Activated CD8-positive, alpha-beta T cell treated with anti-CD3 and anti-CD28 coated beads for 36 hours (primary cell): ENCODE measurements at regions of chr3 and their contacts with region 1.

Region 1: GRCh38 chr3:50192689-50193141 is 1.3 kb downstream of the GNAT1 start:
- DNase-seq: peak; percentile 93
- ATAC-seq: peak; percentile 78
- H3K4me3 Mint-ChIP-seq: no peak overlapping the region
- H3K27ac Mint-ChIP-seq: no peak overlapping the region
- H3K4me1 Mint-ChIP-seq: peaks cover 11% of the 10 kb centered on the region
- H3K27me3 Mint-ChIP-seq: peaks cover 15% of the 10 kb centered on the region
- CTCF ChIP-seq: peak; percentile 94

Region 2: DNA sequence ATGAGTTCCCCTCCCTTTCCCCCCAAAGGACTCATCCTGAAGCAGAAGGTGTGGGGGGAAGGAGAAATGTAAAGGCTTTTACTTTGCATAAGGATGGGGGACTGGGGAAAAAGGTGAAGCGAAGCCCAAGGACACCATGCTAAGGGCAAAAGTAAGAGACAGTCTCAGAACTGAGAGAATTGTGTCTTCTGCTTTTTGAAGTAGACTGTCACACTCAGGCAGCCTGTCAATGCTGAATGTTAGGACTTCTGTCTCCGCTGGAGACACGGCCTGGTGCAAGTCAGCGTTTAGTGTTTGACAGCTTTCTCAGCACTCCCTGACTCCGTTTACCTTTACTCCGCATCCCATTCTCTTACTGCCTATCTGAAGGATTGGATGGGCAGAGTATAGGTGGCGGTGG is 90.2 kb before region 1 on chr3:
- CTCF ChIA-PET with region 1: no interaction called
- POLR2A ChIA-PET with region 1: no interaction called
- intact Hi-C with region 1: no loop called
- DNase-seq: no peak
- ATAC-seq: no peak
- H3K4me3 Mint-ChIP-seq: no peak overlapping the region
- H3K27ac Mint-ChIP-seq: no peak overlapping the region
- H3K4me1 Mint-ChIP-seq: peaks cover 5% of the 10 kb centered on the region
- H3K27me3 Mint-ChIP-seq: no peaks in the 10 kb centered on the region
- CTCF ChIP-seq: no peak

Region 3: DNA sequence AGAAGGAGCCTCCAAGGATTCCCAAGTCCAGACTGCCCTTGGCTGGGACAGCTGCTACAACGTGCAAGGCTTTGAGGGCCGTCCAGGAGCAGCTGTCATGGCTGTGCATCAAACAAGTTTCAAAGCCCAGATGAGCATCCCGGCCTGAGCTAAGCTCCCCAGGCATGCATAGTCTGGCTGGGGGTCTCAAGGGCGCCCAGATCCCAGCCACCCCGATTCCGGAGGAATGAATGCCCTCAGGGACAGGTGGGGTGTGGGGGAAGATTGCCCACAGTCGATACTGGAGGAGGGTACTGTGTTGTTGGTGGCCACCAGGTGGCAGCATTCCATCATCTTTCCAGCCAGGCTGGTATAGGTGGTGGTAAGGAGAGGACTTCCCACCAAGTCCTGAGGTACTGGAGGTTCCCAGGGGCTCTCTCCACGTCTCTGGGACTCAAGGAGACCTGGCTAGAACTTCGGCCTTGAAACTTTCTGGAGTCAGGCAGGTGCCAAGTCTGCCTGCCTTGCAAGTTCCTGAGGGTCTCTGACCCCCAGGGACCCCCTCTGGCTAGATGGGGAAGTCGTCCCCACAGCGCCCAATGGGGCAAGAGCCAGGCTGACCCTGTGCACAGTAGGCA is 71.2 kb before region 1 on chr3:
- CTCF ChIA-PET with region 1: interaction called, 30 read pairs
- POLR2A ChIA-PET with region 1: interaction called, 3 read pairs
- intact Hi-C with region 1: loop called (anchors 1 kb)
- DNase-seq: peak; percentile 84
- ATAC-seq: peak; percentile 90
- H3K4me3 Mint-ChIP-seq: no peak overlapping the region
- H3K27ac Mint-ChIP-seq: no peak overlapping the region
- H3K4me1 Mint-ChIP-seq: no peaks in the 10 kb centered on the region
- H3K27me3 Mint-ChIP-seq: no peaks in the 10 kb centered on the region
- CTCF ChIP-seq: peak; percentile 92

Region 4: GRCh38 chr3:50205414-50206276 is 12.9 kb after region 1 on chr3:
- CTCF ChIA-PET with region 1: interaction called, 28 read pairs
- POLR2A ChIA-PET with region 1: no interaction called
- intact Hi-C with region 1: no loop called
- DNase-seq: peak; percentile 61
- ATAC-seq: peak; percentile 60
- H3K4me3 Mint-ChIP-seq: no peak overlapping the region
- H3K27ac Mint-ChIP-seq: no peak overlapping the region
- H3K4me1 Mint-ChIP-seq: no peaks in the 10 kb centered on the region
- H3K27me3 Mint-ChIP-seq: peaks cover 48% of the 10 kb centered on the region
- CTCF ChIP-seq: no peak

Region 5: GRCh38 chr3:50221411-50222168 is 28.9 kb after region 1 on chr3:
- CTCF ChIA-PET with region 1: interaction called, 204 read pairs
- POLR2A ChIA-PET with region 1: interaction called, 16 read pairs
- intact Hi-C with region 1: loop called (anchors 2 kb)
- DNase-seq: peak; percentile 22
- ATAC-seq: no peak
- H3K4me3 Mint-ChIP-seq: no peak overlapping the region
- H3K27ac Mint-ChIP-seq: no peak overlapping the region
- H3K4me1 Mint-ChIP-seq: peaks cover 10% of the 10 kb centered on the region
- H3K27me3 Mint-ChIP-seq: peaks cover 4% of the 10 kb centered on the region
- CTCF ChIP-seq: no peak

Region 6: DNA sequence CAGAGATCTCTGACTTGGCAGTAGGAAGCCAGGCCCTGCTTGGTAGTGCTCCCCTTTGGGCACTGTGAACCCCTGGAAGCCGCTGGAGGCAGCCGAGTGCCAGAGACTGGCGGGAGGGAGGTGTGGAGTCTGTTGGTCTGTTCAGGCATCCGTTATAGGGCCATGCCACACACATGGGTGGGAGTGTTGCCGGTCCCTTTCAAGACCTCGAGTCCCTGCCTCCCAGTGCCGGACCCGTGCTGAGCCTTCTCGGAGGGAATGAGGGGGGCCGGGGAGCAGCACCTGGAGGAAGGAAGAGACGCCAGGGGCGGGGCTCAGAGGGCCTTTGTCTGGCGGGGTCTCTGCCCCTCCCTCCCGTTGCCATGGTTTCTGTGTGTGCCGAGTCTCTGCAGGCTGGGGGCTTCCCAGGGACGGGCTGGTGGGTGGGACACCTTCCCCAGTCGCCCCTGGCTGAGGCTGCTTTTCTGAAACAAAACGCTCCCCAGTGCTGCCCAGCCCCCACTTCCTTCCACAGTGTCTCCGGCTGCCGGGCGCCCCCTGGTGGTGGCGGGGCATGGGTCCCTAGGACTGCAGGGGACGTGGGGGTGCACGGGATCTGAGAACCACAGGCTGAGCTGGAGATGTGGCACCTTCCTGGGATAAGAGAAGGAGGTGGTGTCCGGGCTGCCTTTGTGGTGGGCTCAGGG is 53.3 kb after region 1 on chr3:
- CTCF ChIA-PET with region 1: interaction called, 28 read pairs
- POLR2A ChIA-PET with region 1: interaction called, 3 read pairs
- intact Hi-C with region 1: no loop called
- DNase-seq: peak; percentile 99
- ATAC-seq: peak; percentile 73
- H3K4me3 Mint-ChIP-seq: peak overlapping the region; percentile 70
- H3K27ac Mint-ChIP-seq: peak overlapping the region; percentile 95
- H3K4me1 Mint-ChIP-seq: peaks cover 74% of the 10 kb centered on the region
- H3K27me3 Mint-ChIP-seq: no peaks in the 10 kb centered on the region
- CTCF ChIP-seq: peak; percentile 98

Region 7: DNA sequence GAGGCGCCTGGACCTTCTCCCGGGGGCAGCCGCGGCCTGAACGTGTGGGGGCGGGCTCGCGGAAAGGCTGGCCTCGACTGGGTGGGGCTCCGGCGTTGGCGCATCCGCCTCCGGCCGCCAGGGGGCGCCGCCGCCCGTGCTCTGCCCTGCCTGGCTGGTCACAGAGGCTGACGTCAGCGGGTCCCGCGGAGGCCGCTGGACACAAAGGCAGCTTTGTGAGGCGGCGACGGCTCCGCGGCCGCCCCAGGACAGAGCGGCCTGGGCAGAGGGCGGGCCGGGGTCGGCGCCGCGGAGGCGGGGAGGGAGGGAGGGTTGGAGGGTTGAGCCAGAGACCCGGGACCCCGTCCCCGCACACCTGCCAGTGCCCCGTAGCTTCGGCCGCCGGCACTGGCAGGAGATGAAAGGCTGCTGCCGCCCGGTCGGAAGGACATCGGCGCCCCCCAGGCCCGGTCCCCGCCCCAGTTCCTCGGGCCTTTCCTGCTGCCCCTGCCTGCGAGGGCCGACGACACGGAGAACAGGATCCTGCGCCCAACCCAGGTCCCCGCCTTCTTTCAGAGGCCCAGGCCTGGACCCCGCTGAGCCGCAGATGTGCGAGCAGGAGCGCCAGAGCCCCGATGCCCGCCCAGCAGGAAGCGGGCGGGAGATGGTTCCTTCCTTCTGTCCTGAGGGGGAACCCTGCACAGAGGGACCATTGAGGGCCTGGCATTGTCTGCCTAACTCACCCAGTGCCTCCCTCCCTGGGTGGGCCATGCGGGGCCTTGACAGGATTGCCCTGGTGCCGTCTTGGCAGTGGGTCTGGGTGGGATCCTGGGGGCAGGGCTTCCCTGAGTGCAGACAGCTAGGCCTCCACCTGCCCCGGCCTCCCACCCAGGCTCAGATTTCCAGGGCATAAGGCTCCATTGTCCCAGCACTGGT is 67.6 kb after region 1 on chr3:
- CTCF ChIA-PET with region 1: interaction called, 17 read pairs
- POLR2A ChIA-PET with region 1: interaction called, 4 read pairs
- intact Hi-C with region 1: no loop called
- DNase-seq: peak; percentile 91
- ATAC-seq: peak; percentile 90
- H3K4me3 Mint-ChIP-seq: peak overlapping the region; percentile 61
- H3K27ac Mint-ChIP-seq: peak overlapping the region; percentile 78
- H3K4me1 Mint-ChIP-seq: peaks cover 4% of the 10 kb centered on the region
- H3K27me3 Mint-ChIP-seq: no peaks in the 10 kb centered on the region
- CTCF ChIP-seq: peak; percentile 99

Region 8: GRCh38 chr3:50278868-50279224 is 86.1 kb after region 1 on chr3 and contains the start of gene LSMEM2:
- CTCF ChIA-PET with region 1: interaction called, 36 read pairs
- POLR2A ChIA-PET with region 1: interaction called, 3 read pairs
- intact Hi-C with region 1: loop called (anchors 2 kb)
- DNase-seq: no peak
- ATAC-seq: no peak
- H3K4me3 Mint-ChIP-seq: no peak within 1 kb of the TSS
- H3K27ac Mint-ChIP-seq: no peak within 1 kb of the TSS
- H3K4me1 Mint-ChIP-seq: peaks cover 21% of the 10 kb centered on the region
- H3K27me3 Mint-ChIP-seq: peaks cover 27% of the 10 kb centered on the region
- CTCF ChIP-seq: no peak
- total RNA-seq, gene LSMEM2: not detected